ENCODE measurements at regions of chr1 and their contacts with region 1.

Region 1: DNA sequence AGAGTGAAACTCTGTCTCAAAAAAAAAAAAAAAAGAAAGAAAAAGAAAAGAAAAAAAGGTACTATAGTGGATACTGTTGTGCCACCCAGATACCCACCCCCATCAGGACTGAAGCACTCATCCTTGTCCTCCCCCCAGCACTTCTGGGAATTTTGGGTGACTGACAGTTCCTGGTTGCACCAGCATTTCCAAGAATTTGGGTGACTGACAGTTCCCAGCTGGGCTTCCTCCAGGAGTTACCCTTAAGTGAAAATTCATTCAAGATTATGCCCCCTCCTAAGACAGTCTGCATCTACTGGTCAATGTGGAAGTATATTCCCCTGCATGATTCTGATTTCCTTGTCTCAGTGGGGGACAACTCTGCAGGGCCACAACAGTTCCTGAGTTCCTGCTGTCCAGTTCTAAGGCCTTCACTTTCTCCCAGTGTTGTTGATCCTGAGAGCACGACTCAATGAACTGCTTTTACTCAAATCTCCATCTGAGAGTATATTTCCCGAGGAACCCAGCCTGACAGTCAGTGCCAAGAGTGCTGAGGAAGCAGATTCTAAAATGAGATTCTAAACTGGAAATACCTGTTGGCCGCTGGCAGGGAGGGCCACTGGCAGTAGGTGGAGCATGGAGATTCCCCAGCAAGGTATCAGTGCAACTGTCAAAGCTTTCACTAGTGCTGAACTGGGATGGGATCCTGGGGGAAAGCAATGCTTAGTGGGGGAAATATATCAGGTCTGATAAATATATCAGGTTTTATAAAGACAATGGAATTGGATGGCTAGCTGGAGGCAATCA is 18.5 kb downstream of the RIIAD1 start:
- DNase-seq: peak; percentile 87 to 88
- H3K4me3 ChIP-seq: no peak overlapping the region
- H3K27ac ChIP-seq: peak overlapping the region; percentile 54 to 76 (median 63)
- H3K4me1 ChIP-seq: peaks cover 10 to 18% of the 10 kb centered on the region in 2 donors
- H3K27me3 ChIP-seq: no peaks in the 10 kb centered on the region
- CTCF ChIP-seq: peak in 1 of 6 experiments; percentile 11
- POLR2A ChIP-seq: peak in 1 of 2 donors; percentile 43

Region 2: GRCh38 chr1:151443846-151444782 is 295.7 kb before region 1 on chr1:
- intact Hi-C with region 1: loop called (anchors 10 kb)
- DNase-seq: peak; percentile 53 to 54
- H3K4me3 ChIP-seq: no peak overlapping the region
- H3K27ac ChIP-seq: peak overlapping the region in 2 of 3 donors; percentile 9 to 55
- H3K4me1 ChIP-seq: peaks cover 16 to 33% of the 10 kb centered on the region in 2 donors
- H3K27me3 ChIP-seq: no peaks in the 10 kb centered on the region
- CTCF ChIP-seq: peak; percentile 26 to 78 (median 72)
- POLR2A ChIP-seq: no peak

Region 3: DNA sequence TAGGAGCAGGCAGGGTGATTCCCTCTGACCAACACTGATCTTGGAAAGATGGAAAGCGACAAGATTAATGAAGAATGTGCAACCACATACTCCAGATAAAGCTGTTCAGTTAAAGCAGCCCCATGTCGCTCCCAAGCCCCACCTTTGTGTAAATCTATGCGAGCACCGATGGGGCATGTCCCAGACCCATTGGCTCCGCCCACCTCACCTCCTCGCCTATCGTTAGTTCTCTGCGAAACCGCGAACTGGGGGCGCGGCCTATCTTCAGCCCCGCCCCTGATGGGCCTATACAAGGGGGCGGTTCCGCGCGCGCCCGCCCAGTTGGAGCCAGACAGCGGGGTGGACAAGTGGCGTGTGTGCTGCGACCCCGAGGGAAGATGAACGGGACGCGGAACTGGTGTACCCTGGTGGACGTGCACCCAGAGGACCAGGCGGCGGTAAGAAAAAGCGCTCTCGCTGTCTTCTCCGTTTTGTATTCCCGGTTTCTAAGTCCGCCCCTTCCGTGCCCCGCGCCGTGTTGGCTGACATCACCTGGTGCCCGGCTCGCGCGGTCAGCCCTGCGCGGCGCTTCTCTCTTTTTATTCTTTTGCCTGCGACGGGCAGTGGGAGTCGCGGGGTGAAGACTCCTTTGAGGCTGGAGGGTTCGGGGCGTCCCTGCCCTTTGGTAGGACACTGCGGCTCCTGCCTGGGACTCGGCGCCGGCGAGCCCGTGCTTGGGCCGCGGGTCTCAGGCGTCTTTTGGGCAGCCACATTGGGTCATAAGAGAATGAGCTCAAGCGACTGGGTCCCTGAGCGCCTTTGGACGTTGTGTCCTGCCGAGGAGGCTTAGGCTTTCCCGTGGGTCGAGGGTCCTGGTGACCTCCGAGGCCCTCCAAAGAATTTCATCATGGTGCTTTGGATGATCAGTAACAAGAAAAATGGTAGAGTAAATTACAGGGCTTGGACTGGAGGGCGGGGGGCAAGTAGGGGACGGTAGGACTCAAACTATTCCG is 199.5 kb before region 1 on chr1 and contains the start of gene TUFT1:
- intact Hi-C with region 1: loop called (anchors 10 kb)
- DNase-seq: peak; percentile 94 to 95
- H3K4me3 ChIP-seq: peak within 1 kb of the TSS; percentile 13 to 97 (median 67)
- H3K27ac ChIP-seq: peak within 1 kb of the TSS; percentile 91 to 97 (median 93)
- H3K4me1 ChIP-seq: peaks cover 8 to 19% of the 10 kb centered on the region in 2 donors
- H3K27me3 ChIP-seq: no peaks in the 10 kb centered on the region
- CTCF ChIP-seq: no peak
- POLR2A ChIP-seq: peak; percentile 81 to 99
- total RNA-seq, gene TUFT1: 4.0 to 8.8 (median 5.0) TPM

Region 4: GRCh38 chr1:151594143-151594625 is 145.6 kb before region 1 on chr1:
- intact Hi-C with region 1: loop called (anchors 2 kb)
- DNase-seq: peak; percentile 91 to 93
- H3K4me3 ChIP-seq: no peak overlapping the region
- H3K27ac ChIP-seq: no peak overlapping the region
- H3K4me1 ChIP-seq: peaks cover 0 to 5% of the 10 kb centered on the region in 2 donors
- H3K27me3 ChIP-seq: no peaks in the 10 kb centered on the region
- CTCF ChIP-seq: peak; percentile 73 to 96 (median 85)
- POLR2A ChIP-seq: no peak

Region 5: GRCh38 chr1:151839457-151840405 is 99.9 kb after region 1 on chr1 and contains the start of gene C2CD4D:
- intact Hi-C with region 1: loop called (anchors 10 kb)
- DNase-seq: peak; percentile 81 to 82
- H3K4me3 ChIP-seq: peak within 1 kb of the TSS; percentile 7 to 32 (median 27)
- H3K27ac ChIP-seq: peak within 1 kb of the TSS; percentile 79 to 95 (median 89)
- H3K4me1 ChIP-seq: peaks cover 23 to 47% of the 10 kb centered on the region in 2 donors
- H3K27me3 ChIP-seq: no peaks in the 10 kb centered on the region
- CTCF ChIP-seq: peak in 3 of 6 experiments; percentile 19 to 48 (median 27)
- POLR2A ChIP-seq: peak in 1 of 2 donors; percentile 82
- total RNA-seq, gene C2CD4D: 0.29 to 1.3 (median 0.33) TPM in 3 of 4 donors, not detected in the other

Region 6: GRCh38 chr1:152029144-152029928 is 289.6 kb after region 1 on chr1:
- intact Hi-C with region 1: no loop called
- DNase-seq: no peak
- H3K4me3 ChIP-seq: no peak overlapping the region
- H3K27ac ChIP-seq: no peak overlapping the region
- H3K4me1 ChIP-seq: peaks cover 0 to 3% of the 10 kb centered on the region in 2 donors
- H3K27me3 ChIP-seq: no peaks in the 10 kb centered on the region
- CTCF ChIP-seq: no peak
- POLR2A ChIP-seq: no peak

Measured in thyroid gland (tissue), 4 donors.